ENCODE measurements at regions of chr10 and their contacts with region 1.

Region 1: DNA sequence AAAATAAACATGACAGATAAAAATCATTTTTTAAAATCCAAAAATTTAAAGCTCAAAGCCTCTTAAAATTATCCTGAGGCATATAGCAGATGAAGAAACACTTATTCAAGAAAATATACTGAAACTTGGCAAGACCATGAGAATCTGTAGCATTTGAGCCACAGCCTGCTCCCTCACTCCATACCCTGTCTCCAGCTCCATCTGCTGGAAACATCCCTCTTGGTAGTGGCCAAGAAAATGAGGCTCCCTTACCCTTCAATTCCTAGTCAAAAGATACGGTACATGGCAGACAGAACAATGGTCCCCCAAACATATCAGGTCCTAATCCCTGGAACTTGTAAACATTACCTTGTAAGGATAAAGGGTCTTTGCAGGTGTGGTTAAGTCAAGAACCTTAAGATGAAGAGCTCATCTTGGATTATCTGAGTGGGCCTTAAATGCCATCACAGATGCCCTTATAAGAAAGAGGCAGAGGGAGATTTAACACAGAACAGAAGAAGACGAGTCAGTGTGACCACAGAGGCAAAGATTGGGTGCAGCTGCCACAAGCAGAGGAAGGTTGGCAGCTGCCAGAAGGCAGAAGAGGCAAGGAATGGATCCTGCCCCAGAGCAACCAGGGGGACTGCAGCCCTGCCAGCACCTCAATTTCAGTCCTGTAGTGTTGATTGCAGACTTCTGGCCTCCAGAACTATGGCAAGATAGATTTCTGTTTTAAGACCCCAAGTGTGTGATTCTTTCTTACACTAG is 149.4 kb downstream of the ZNF248 start:
- DNase-seq: no peak
- H3K4me3 Mint-ChIP-seq: no peak overlapping the region
- H3K27ac Mint-ChIP-seq: no peak overlapping the region
- H3K4me1 Mint-ChIP-seq: no peaks in the 10 kb centered on the region
- H3K27me3 Mint-ChIP-seq: no peaks in the 10 kb centered on the region
- CTCF ChIP-seq: no peak

Region 2: DNA sequence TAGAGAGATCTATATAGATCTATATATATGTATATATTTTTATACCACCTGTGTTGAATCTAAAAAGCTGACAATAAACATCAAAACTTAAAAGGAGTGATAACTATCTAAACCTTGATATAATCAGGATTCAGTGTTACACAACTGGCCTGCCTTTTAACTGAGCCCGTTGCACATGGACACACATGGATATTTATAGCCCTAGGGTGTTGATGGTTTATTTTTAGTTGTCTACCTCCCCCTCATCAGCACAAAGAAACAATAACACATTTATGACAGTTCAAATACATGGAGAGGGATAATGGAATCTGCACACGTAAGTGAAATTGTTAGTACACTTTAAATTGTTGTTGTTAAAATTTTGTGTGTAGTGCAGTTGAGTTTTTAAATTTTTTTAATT is 187.5 kb before region 1 on chr10:
- CTCF ChIA-PET with region 1: no interaction called
- POLR2A ChIA-PET with region 1: no interaction called
- intact Hi-C with region 1: loop called (anchors 5 kb)
- DNase-seq: no peak
- H3K4me3 Mint-ChIP-seq: no peak overlapping the region
- H3K27ac Mint-ChIP-seq: no peak overlapping the region
- H3K4me1 Mint-ChIP-seq: no peaks in the 10 kb centered on the region
- H3K27me3 Mint-ChIP-seq: no peaks in the 10 kb centered on the region
- CTCF ChIP-seq: no peak

Region 3: DNA sequence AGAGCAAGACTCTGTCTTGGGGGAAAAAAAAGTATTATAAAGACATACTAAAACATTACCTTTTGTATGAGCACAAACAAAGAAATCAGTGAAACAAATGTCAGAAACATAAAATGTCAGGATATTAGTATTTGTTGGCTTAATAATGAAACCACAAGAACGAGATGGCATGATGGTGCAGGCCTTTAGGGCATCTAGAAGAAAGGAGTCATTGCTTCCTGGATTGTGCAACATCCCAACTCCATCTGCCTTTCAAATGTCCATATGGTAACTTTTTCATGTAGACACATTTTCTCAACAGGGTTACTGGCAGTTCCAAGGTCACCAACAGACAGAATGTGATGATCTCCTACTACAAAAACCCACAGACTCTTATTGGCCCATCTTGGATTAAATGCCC is 52.8 kb after region 1 on chr10:
- CTCF ChIA-PET with region 1: no interaction called
- POLR2A ChIA-PET with region 1: no interaction called
- intact Hi-C with region 1: no loop called
- DNase-seq: no peak
- H3K4me3 Mint-ChIP-seq: no peak overlapping the region
- H3K27ac Mint-ChIP-seq: no peak overlapping the region
- H3K4me1 Mint-ChIP-seq: no peaks in the 10 kb centered on the region
- H3K27me3 Mint-ChIP-seq: no peaks in the 10 kb centered on the region
- CTCF ChIP-seq: no peak

Region 4: DNA sequence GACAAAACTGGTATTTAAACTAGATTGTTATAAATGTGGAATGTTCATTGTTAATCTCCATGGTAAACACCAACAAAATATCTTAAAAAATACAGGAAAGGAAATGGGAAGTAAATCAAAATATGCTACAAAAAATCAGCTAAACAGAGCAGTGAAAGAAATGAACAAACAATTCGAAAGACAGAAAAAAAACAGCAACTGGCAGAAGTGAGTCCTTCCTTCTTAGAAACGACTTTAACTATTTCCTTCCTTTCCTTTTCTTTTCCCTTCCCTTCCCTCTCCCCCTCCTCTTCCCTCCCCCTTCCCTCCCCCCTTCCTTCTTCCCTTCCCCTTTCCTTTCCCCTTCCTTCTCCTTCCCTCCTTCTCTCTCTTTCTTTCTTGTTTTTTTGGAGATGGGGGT is 136.6 kb after region 1 on chr10:
- CTCF ChIA-PET with region 1: no interaction called
- POLR2A ChIA-PET with region 1: no interaction called
- intact Hi-C with region 1: no loop called
- DNase-seq: no peak
- H3K4me3 Mint-ChIP-seq: no peak overlapping the region
- H3K27ac Mint-ChIP-seq: no peak overlapping the region
- H3K4me1 Mint-ChIP-seq: no peaks in the 10 kb centered on the region
- H3K27me3 Mint-ChIP-seq: no peaks in the 10 kb centered on the region
- CTCF ChIP-seq: no peak

Measured in MCF 10A (cell line).